ENCODE measurements at regions of chr12 and their contacts with region 1.

Region 1: DNA sequence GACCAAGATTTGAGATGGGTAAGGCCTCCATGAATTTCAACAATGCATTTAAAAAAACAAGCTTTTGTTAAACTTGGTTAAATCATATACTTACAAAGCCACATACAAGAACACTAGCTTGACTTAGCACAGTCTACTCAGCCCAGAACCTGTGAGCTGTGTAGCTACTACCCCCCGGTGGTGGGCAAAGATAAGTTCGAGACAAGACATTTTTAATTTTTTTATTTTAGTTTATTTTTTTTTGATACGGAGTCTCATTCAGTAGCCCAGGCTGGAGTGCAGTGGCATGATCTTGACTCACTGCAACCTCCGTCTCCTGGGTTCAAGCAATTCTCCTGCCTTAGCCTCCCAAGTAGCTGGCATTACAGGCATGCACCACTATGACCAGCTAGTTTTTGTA is 3.7 kb upstream of the NECAP1 start:
- DNase-seq: peak; percentile 44 to 89 (median 59)
- ATAC-seq: peak; percentile 28
- H3K4me3 ChIP-seq: no peak overlapping the region
- H3K4me3 Mint-ChIP-seq: peak overlapping the region; percentile 22
- H3K27ac ChIP-seq: no peak overlapping the region
- H3K27ac Mint-ChIP-seq: peak overlapping the region; percentile 98
- H3K4me1 ChIP-seq: peaks cover 16% of the 10 kb centered on the region
- H3K4me1 Mint-ChIP-seq: peaks cover 54% of the 10 kb centered on the region
- H3K27me3 ChIP-seq: no peaks in the 10 kb centered on the region
- H3K27me3 Mint-ChIP-seq: no peaks in the 10 kb centered on the region
- CTCF ChIP-seq: peak; percentile 70

Region 2: DNA sequence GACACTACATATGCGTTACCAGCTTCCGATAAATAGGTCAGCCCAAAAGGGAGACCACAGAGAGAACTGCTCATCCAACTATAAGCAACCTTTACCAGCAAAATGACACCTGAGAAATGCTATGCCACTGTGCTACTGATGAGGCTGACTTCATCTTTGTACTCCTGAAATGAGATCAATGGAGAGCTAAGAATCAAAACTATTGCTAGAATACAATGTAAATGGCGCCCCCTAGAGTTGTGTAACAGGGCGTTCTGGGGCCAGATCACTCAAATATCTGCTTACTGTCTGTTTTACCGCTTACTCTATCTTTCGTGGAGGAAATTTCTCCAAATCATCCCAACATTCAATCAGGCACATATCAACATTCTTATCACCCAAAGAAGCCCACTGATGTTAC is 1393.8 kb before region 1 on chr12:
- CTCF ChIA-PET with region 1: no interaction called
- POLR2A ChIA-PET with region 1: no interaction called
- intact Hi-C with region 1: no loop called
- DNase-seq: peak in 6 of 14 experiments; percentile 13 to 74 (median 58)
- ATAC-seq: no peak
- H3K4me3 ChIP-seq: no peak overlapping the region
- H3K4me3 Mint-ChIP-seq: peak overlapping the region; percentile 22
- H3K27ac ChIP-seq: peak overlapping the region in 1 of 2 donors; percentile 32
- H3K27ac Mint-ChIP-seq: peak overlapping the region; percentile 50
- H3K4me1 ChIP-seq: peaks cover 38% of the 10 kb centered on the region
- H3K4me1 Mint-ChIP-seq: peaks cover 60% of the 10 kb centered on the region
- H3K27me3 ChIP-seq: no peaks in the 10 kb centered on the region
- H3K27me3 Mint-ChIP-seq: no peaks in the 10 kb centered on the region
- CTCF ChIP-seq: peak; percentile 60

Region 3: DNA sequence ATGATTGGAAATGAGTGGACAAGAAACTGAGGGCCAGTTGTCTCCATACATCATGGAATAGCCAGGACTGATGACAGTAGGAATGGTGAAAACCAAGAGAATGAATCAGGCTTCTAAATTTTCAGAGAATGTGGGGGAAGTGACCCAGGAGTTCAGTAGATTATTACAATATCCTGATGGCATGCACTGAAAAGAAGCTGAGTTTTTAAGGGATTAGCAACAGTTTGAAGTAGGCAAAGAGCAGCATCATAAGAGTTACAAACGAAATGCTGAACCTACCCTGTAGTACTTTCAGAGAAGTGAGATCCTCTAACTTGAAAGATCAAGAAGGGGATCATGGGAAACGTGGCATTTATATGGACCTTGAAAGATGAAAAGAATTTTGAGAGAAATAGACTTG is 218.8 kb before region 1 on chr12:
- CTCF ChIA-PET with region 1: interaction called, 6 read pairs
- POLR2A ChIA-PET with region 1: interaction called, 3 read pairs
- intact Hi-C with region 1: loop called (anchors 1 to 2 kb)
- DNase-seq: no peak
- ATAC-seq: no peak
- H3K4me3 ChIP-seq: no peak overlapping the region
- H3K4me3 Mint-ChIP-seq: no peak overlapping the region
- H3K27ac ChIP-seq: no peak overlapping the region
- H3K27ac Mint-ChIP-seq: no peak overlapping the region
- H3K4me1 ChIP-seq: peaks cover 4% of the 10 kb centered on the region
- H3K4me1 Mint-ChIP-seq: peaks cover 6% of the 10 kb centered on the region
- H3K27me3 ChIP-seq: peaks cover 0 to 3% of the 10 kb centered on the region in 2 experiments
- H3K27me3 Mint-ChIP-seq: no peaks in the 10 kb centered on the region
- CTCF ChIP-seq: no peak

Region 4: GRCh38 chr12:8026291-8026900 is 52.0 kb before region 1 on chr12:
- CTCF ChIA-PET with region 1: interaction called, 5 read pairs
- POLR2A ChIA-PET with region 1: interaction called, 18 read pairs
- intact Hi-C with region 1: loop called in 1 of 2 experiments (anchors 1 kb)
- DNase-seq: peak; percentile 86 to 99 (median 93)
- ATAC-seq: peak; percentile 88
- H3K4me3 ChIP-seq: peak overlapping the region; percentile 81
- H3K4me3 Mint-ChIP-seq: peak overlapping the region; percentile 92
- H3K27ac ChIP-seq: peak overlapping the region; percentile 98 to 100
- H3K27ac Mint-ChIP-seq: peak overlapping the region; percentile 99
- H3K4me1 ChIP-seq: peaks cover 20% of the 10 kb centered on the region
- H3K4me1 Mint-ChIP-seq: peaks cover 18% of the 10 kb centered on the region
- H3K27me3 ChIP-seq: no peaks in the 10 kb centered on the region
- H3K27me3 Mint-ChIP-seq: no peaks in the 10 kb centered on the region
- CTCF ChIP-seq: no peak

Region 5: DNA sequence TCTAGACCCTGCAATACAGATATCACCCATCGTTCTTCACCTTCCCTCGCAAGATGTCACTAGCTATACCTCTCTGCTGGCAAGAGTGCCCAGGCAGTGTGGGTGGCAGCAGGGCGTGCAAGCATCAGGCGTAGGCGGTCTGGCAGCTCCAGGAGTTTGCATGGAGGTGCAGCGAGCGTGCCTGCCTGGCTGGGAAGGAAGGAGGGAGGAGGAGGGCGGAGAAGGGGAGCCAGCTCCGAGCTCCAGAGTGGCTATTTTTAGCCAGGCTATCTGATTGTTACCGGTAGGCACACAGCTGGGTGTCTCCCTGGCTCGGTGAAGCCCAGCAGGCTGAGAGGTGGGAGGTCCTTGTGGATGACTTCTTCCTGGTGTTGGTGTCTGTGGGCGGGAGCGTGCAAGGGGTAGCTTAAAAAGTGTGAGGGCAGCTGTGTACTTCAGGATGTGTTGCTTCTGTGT is 39.7 kb before region 1 on chr12:
- CTCF ChIA-PET with region 1: interaction called, 68 read pairs
- POLR2A ChIA-PET with region 1: interaction called, 8 read pairs
- intact Hi-C with region 1: loop called in 1 of 2 experiments (anchors 2 kb)
- DNase-seq: peak in 5 of 14 experiments; percentile 28 to 61 (median 50)
- ATAC-seq: peak; percentile 67
- H3K4me3 ChIP-seq: peak overlapping the region; percentile 33
- H3K4me3 Mint-ChIP-seq: peak overlapping the region; percentile 58
- H3K27ac ChIP-seq: peak overlapping the region in 1 of 2 donors; percentile 43
- H3K27ac Mint-ChIP-seq: peak overlapping the region; percentile 96
- H3K4me1 ChIP-seq: peaks cover 62% of the 10 kb centered on the region
- H3K4me1 Mint-ChIP-seq: peaks cover 64% of the 10 kb centered on the region
- H3K27me3 ChIP-seq: no peaks in the 10 kb centered on the region
- H3K27me3 Mint-ChIP-seq: no peaks in the 10 kb centered on the region
- CTCF ChIP-seq: no peak

Region 6: DNA sequence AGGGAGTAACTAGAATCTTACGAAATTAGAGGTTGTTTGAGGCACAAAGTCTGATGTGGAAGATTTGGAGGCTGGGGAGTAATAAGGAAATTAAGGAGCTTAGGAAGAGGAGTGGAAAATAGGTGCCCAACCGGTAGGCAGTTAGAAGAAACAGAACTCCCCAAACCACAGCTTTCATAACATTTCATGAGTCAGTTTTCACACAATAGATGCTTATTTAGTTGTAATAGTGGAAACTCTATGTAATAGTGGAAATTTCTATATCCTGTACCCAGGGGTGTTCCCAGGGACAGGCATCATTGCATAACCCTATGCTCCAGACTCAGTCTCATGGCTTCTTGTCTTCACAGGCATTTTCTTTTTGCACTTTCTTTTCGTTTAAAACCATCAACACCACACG is 20.6 kb before region 1 on chr12:
- CTCF ChIA-PET with region 1: interaction called, 14 read pairs
- POLR2A ChIA-PET with region 1: interaction called, 3 read pairs
- intact Hi-C with region 1: no loop called
- DNase-seq: peak in 2 of 14 experiments; percentile 49 to 63
- ATAC-seq: no peak
- H3K4me3 ChIP-seq: no peak overlapping the region
- H3K4me3 Mint-ChIP-seq: no peak overlapping the region
- H3K27ac ChIP-seq: no peak overlapping the region
- H3K27ac Mint-ChIP-seq: no peak overlapping the region
- H3K4me1 ChIP-seq: peaks cover 4% of the 10 kb centered on the region
- H3K4me1 Mint-ChIP-seq: no peaks in the 10 kb centered on the region
- H3K27me3 ChIP-seq: no peaks in the 10 kb centered on the region
- H3K27me3 Mint-ChIP-seq: no peaks in the 10 kb centered on the region
- CTCF ChIP-seq: no peak

Region 7: DNA sequence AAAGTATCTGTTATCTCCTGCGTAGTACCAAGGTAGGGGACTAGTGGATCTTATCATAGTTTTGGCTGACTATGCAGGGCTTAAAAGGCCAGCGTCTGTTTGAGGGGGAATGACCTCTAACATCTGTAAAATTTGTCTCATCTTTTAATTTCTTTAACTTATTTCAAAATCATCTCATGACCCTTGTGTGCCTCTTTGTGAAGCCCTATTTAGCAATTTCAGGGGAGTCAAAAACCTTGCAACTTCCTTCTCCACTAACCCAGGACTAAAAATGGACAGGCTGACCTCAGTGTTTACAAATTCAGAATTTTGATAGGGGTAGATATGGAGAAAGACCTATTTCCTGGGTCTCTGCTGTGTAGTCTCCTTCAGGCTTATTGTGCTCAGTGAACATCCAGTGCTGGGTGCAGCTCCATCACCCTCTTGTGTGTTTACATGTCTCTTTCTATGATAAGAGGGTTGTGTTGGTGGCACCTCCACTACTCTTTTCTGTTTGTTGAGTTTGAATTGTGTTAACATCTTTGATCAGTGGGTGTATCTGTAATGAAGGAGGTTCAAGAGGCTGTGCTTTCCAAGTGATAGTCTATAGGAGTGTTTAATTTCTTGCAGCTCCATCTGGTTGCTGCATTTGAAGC is 18.0 kb after region 1 on chr12:
- CTCF ChIA-PET with region 1: no interaction called
- POLR2A ChIA-PET with region 1: interaction called, 3 read pairs
- intact Hi-C with region 1: loop called in 1 of 2 experiments (anchors 1 kb)
- DNase-seq: no peak
- ATAC-seq: no peak
- H3K4me3 ChIP-seq: no peak overlapping the region
- H3K4me3 Mint-ChIP-seq: no peak overlapping the region
- H3K27ac ChIP-seq: no peak overlapping the region
- H3K27ac Mint-ChIP-seq: no peak overlapping the region
- H3K4me1 ChIP-seq: no peaks in the 10 kb centered on the region
- H3K4me1 Mint-ChIP-seq: peaks cover 4% of the 10 kb centered on the region
- H3K27me3 ChIP-seq: no peaks in the 10 kb centered on the region
- H3K27me3 Mint-ChIP-seq: no peaks in the 10 kb centered on the region
- CTCF ChIP-seq: no peak

Measured in CD4-positive, alpha-beta T cell (primary cell).